ENCODE measurements at regions of chr15 and their contacts with region 1.

Region 1: GRCh38 chr15:92714477-92715401 is 59.2 kb upstream of the FAM174B start:
- DNase-seq: peak; percentile 84
- CTCF ChIP-seq: peak; percentile 75

Region 2: GRCh38 chr15:90979582-90979981 is 1735.2 kb before region 1 on chr15:
- in situ Hi-C with region 1: no loop called
- DNase-seq: no peak
- CTCF ChIP-seq: no peak

Region 3: DNA sequence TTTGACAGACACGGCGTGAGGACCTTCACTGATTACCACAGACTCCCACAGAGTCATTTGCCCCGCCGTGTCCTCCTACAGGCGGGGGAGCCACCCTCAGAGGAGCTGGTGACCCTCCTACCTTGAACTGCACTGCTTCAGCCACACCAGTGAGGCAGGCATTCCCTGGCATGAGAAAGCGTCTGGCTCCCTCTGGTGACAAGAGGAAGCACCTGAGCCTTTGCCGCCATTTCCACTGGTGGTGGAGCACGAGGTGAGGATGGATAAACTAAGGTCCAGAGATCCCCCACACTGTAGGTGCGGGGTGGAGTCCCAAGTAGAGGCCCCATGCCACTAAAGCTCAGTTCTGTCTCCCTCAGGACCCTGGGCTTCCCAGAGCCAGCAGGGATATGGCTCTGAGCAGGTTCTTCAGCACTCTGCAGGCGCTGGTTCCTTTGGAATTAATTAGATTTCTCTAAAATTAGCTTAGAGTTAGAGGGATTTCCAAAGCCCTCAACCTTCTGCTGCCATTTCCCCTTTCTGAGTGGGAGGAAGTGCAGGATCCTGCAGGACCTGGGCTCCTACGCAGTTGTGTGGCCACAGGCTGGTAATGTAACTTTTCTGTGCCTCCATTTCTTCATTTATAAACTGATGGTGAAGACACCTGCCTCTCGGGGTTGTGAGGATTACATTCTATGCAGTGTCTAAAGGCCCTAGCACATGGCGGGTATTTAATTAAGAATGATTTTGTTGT is 637.2 kb before region 1 on chr15:
- in situ Hi-C with region 1: loop called (anchors 25 kb)
- DNase-seq: peak; percentile 72
- CTCF ChIP-seq: peak; percentile 57

Region 4: GRCh38 chr15:92391640-92392039 is 323.1 kb before region 1 on chr15:
- in situ Hi-C with region 1: loop called (anchors 25 kb)
- DNase-seq: peak; percentile 40
- CTCF ChIP-seq: peak; percentile 12

Region 5: DNA sequence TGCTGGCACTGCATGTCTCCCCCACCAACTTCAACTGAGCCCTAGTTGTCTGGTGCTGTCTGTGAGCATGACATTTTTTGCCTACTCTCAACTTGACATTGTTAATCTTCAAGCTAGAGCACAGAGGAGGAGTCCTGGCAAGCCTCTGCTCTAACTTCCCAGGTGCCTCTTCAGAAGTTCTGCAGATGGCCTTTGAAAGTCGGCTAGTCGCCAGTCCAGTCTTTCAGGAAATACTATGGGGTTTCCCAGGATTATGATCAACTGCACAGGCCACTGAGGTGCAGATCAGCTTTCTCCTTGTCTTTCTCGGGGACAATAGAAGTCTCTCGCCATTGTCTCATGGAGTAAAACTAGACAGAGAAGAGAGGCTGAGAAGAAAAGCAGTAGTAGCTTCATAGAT is 234.4 kb before region 1 on chr15:
- in situ Hi-C with region 1: no loop called
- DNase-seq: no peak
- CTCF ChIP-seq: no peak

Region 6: GRCh38 chr15:92510163-92510882 is 204.4 kb before region 1 on chr15:
- in situ Hi-C with region 1: no loop called
- DNase-seq: no peak
- CTCF ChIP-seq: no peak

Region 7: DNA sequence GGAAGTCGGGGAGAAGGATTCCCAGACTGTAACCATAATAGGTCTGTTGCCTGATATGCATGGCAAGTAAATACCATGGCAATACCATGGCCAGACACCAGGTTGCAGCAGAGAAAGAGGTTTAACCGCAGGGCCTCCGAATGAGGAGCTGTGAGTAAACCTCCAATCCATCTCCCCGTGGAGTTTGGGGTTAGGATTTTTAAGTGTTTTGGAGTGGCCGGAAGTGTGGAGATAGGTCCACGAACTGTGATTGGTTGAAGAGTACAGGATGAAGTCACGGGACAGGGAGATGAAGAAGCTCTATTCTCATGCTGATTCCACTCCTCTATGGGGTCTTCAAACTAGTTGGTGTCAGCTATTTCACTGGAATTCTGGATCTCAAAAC is 193.1 kb before region 1 on chr15:
- in situ Hi-C with region 1: loop called (anchors 5 kb)
- DNase-seq: peak; percentile 59
- CTCF ChIP-seq: peak; percentile 54

Region 8: GRCh38 chr15:92617549-92618520 is 96.9 kb before region 1 on chr15:
- in situ Hi-C with region 1: loop called (anchors 10 kb)
- DNase-seq: no peak
- CTCF ChIP-seq: no peak

Region 9: DNA sequence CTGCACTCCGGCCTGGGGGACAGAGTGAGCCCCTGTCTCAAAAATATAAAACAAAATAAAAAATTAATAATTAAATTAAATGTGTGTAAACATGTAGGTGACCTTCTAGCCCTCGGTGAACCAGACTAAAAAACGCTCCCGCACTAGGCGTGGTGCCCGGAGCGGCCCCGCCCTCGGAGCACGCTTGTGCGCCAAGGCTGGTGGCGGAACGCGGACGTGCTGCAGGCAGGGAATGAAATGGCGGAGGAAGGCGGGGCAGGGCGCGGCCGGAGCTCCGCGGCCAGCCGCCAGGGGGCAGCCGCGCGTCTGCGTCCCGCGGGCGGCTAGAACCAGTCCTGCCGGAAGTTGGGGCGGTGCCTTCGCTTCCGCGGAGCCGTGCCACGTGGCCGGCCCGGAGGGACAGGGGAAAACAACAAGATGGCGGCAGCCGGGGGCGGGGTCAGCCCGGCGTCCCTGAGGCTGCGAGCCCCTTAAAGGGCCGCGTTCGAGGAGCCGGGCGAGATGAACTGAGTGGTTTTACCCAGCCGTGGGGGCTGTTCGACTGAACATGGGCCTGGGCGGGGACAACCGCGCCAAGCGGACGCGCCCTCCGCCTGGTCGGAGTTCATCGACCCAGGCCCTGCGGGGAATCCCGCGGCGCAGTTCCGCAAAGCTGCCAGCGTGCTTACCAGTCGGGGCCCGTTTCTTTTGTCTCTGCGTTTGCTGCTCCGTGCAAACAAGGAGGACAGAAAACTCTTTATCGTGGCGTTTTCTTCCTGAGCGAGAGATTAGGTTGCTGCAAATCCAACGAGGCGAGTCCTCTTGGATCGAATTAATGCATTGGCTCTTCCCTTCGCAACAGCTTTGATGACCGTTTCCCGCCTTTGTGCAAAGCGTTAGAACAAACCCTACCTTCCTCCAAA is 94.5 kb after region 1 on chr15:
- in situ Hi-C with region 1: no loop called
- DNase-seq: peak; percentile 96
- CTCF ChIP-seq: peak; percentile 96